ENCODE measurements at regions of chr18 and their contacts with region 1.

Region 1: GRCh38 chr18:22166069-22166950 is 3.1 kb upstream of the GATA6 start:
- DNase-seq: no peak
- H3K27ac ChIP-seq: no peak overlapping the region
- CTCF ChIP-seq: no peak

Region 2: DNA sequence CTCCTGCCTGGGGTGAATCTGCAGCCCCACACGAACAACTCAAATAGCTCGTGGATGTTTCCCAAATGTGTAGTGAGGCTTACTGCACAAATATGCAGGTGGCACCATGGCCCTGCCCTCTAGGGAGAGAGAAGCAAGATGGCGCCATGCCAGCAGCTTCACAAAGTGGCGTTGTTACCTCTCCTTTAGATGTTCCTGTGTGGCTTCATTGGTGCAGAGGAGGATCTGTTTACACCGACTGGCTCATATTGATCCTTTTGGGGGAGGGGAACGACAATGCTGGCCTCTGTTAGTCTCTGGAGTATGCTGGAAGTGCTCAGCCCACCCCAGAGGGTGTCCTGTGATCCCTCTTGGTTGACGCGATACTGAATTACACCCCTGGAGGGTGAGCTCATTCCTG is 96.4 kb before region 1 on chr18:
- CTCF ChIA-PET with region 1: interaction called, 10 read pairs
- POLR2A ChIA-PET with region 1: no interaction called
- DNase-seq: no peak
- H3K27ac ChIP-seq: no peak overlapping the region
- CTCF ChIP-seq: no peak